Endothelial cell of umbilical vein (primary cell): ENCODE measurements at regions of chr13 and their contacts with region 1.

Region 1: DNA sequence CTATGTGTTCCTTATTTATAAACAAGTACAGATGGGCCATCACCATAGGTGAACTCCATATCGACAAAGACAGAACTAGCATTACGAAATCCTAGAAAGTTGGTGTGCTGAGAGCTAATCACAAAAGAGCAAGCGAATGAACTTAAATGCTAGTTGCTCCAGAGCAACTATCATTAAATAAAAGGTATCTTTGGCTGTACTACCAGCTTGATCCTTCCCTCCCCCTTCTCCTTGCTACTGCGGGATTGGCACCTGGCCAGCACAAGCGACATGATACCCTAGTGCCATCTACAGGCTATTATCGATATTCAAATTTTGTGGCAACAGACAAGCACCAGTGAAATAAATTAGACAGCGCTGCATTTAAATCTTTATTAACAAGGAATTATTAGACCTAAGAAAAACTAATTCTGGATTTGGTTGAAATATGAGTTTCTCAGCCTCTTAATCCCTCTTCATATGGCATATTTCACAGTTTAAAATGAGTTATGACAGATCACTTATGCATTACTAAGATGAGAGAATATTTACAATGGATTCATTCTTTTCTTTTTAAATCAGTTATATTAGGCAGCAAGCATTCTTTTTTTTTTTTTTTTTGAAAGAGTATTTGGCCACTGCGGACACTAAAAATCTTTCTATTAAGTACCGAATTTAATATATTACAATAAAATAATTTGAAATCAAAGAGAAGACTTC is 5.8 kb downstream of the PCDH9 start:
- DNase-seq: peak; percentile 88
- H3K4me3 ChIP-seq: peak overlapping the region in 1 of 3 experiments; percentile 21
- H3K27ac ChIP-seq: no peak overlapping the region
- H3K4me1 ChIP-seq: peaks cover 15% of the 10 kb centered on the region
- H3K27me3 ChIP-seq: no peaks in the 10 kb centered on the region
- CTCF ChIP-seq: peak; percentile 51 to 60
- POLR2A ChIP-seq: no peak

Region 2: GRCh38 chr13:65966991-65967451 is 1257.3 kb before region 1 on chr13:
- CTCF ChIA-PET with region 1: no interaction called
- POLR2A ChIA-PET with region 1: no interaction called
- dilution Hi-C with region 1: no loop called
- intact Hi-C with region 1: loop called (anchors 2 kb)
- DNase-seq: peak; percentile 36
- H3K4me3 ChIP-seq: no peak overlapping the region
- H3K27ac ChIP-seq: no peak overlapping the region
- H3K4me1 ChIP-seq: no peaks in the 10 kb centered on the region
- H3K27me3 ChIP-seq: no peaks in the 10 kb centered on the region
- CTCF ChIP-seq: peak; percentile 18 to 27
- POLR2A ChIP-seq: no peak

Region 3: DNA sequence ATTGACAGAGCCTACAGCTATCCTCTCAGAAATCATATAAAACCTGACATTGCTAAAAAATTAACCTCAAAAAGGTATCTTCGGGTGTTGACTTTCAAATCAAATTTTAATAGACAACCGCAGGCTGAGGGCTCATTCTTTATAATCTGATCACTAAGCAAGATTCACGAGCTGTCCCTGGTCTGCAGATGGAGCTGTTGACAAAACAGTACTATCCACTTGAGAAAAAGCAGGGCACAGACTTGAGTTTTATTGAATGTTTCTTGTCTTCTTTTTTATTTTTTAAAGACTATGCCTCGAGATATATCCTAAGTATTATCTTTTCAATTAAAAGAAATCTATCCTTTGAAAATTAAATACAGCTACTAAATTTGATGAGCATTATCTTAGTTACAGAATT is 534.7 kb before region 1 on chr13:
- CTCF ChIA-PET with region 1: interaction called, 16 read pairs
- POLR2A ChIA-PET with region 1: no interaction called
- dilution Hi-C with region 1: no loop called
- intact Hi-C with region 1: loop called (anchors 1 kb)
- DNase-seq: peak; percentile 26
- H3K4me3 ChIP-seq: no peak overlapping the region
- H3K27ac ChIP-seq: no peak overlapping the region
- H3K4me1 ChIP-seq: no peaks in the 10 kb centered on the region
- H3K27me3 ChIP-seq: no peaks in the 10 kb centered on the region
- CTCF ChIP-seq: peak in 1 of 2 donors; percentile 23
- POLR2A ChIP-seq: no peak

Region 4: DNA sequence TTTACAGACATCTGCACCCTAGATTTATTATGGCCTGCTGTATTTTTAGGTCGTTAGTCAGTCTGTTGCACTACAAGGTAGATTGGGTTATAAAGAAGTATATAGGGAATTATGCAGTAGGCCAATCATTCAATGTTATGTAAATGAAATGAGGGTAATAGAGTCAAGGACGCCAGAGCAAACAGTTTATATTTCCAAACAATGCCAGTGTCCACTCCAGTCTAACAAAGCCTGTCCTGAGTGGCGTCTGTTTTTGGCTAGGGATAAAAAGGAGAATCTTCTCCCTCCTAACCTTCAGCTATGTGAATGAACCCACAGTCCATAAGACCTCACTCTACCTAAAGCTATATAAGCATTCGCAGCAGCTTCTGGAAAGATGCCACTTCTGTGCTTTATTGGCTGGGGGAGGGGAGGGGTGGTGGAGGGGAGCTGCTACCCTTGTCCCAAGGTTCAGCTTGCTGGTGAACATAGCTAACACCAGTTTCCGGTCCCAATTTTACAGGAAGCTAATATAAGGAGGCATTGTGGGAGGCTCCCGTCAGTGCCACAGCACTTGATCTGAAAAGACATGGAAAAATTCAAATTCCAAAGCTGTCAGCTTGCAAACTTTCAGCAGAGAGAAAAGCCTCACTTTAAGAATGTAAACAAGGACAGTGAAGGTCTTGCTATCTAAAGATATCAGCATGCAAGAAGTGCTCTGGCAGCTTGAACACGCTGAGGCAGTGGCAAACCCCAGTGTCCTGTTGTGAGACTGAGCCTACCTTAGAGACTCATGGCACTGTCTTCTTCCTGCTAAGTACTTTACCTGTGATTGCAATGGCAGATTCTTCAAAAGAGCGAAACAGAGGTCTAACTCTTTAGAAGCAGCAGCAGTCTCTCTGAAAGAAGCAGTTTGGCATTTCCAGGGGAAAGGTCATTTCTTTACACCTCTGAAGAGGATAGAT is 364.1 kb before region 1 on chr13:
- CTCF ChIA-PET with region 1: no interaction called
- POLR2A ChIA-PET with region 1: no interaction called
- dilution Hi-C with region 1: no loop called
- intact Hi-C with region 1: loop called (anchors 10 kb)
- DNase-seq: peak; percentile 23
- H3K4me3 ChIP-seq: no peak overlapping the region
- H3K27ac ChIP-seq: no peak overlapping the region
- H3K4me1 ChIP-seq: peaks cover 13% of the 10 kb centered on the region
- H3K27me3 ChIP-seq: no peaks in the 10 kb centered on the region
- CTCF ChIP-seq: no peak
- POLR2A ChIP-seq: no peak

Region 5: DNA sequence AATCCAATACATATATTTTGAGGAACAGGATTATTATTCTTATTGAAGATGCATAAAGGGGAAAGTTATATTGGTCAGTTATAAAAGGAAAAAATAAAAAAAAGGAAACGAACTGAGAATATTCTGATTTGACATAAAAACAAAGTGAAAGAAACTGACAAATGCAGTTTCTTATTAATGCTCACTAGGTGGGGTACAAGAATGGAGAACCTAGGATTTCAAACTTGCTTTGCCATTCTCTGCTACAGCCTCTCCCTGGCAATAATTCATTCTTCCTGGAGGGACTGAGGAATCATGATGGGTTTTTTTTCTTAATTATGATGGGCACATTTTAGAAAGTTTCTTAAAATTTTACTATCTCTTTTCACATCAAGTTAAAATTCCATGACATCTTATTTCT is 149.1 kb before region 1 on chr13:
- CTCF ChIA-PET with region 1: interaction called, 4 read pairs
- POLR2A ChIA-PET with region 1: no interaction called
- dilution Hi-C with region 1: no loop called
- intact Hi-C with region 1: loop called (anchors 5 kb)
- DNase-seq: peak; percentile 21
- H3K4me3 ChIP-seq: no peak overlapping the region
- H3K27ac ChIP-seq: no peak overlapping the region
- H3K4me1 ChIP-seq: no peaks in the 10 kb centered on the region
- H3K27me3 ChIP-seq: no peaks in the 10 kb centered on the region
- CTCF ChIP-seq: no peak
- POLR2A ChIP-seq: no peak